Motor neuron (in vitro differentiated cells): ENCODE measurements at regions of chr7 and their contacts with region 1.

Region 1: DNA sequence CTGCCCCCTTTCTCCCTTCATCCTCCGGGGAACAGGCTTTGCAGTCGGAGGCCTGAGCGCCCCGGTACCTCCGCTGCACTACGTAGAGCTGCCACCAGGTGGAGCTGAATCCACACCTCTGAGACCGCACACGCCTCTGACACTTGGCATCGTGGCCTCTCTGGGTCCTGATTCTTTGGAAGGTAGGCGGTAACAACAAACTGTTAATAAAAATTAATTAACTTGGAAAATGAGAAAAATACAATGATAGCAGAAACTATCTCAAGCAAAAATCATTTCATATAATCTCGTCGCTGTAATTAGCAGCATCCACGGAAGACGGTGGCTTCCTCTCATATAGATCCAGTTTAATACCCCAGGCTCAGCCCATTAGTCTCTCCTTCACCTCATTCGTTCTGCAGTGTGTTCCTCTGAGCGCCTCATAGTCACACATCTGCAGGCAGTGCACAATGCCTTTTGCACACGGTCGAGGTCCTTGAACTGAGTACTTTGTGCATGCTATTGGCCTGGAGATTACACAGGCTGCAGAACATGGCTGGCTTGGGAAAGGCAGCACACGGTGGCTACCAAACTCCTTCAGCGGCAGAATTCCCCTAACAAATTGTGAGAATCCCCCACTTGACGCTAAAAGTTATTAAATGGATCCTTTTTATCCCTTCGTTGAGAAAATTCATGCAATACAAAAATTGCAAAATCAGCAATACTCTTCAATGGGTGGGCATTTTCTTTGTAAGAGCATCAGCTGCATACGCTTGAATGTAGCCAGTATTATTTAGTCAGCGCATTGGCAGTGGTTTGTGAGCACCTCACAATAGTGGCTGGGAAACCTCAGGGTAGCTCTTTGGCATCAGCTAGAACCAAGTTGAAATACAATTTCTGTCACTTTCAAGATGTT is 18.7 kb downstream of the OR9A2 start:
- ATAC-seq: peak; percentile 78 to 99 (median 86)
- H3K4me3 ChIP-seq: no peak overlapping the region
- H3K27ac ChIP-seq: no peak overlapping the region
- H3K4me1 ChIP-seq: no peaks in the 10 kb centered on the region

Region 2: GRCh38 chr7:143434660-143435059 is 426.4 kb after region 1 on chr7:
- in situ Hi-C with region 1: loop called in 1 of 9 experiments (anchors 25 kb)
- ATAC-seq: peak in 3 of 8 experiments; percentile 27 to 59 (median 45)
- H3K4me3 ChIP-seq: no peak overlapping the region
- H3K27ac ChIP-seq: no peak overlapping the region
- H3K4me1 ChIP-seq: peaks cover 11 to 17% of the 10 kb centered on the region in 2 donors